ENCODE measurements at regions of chr1 and their contacts with region 1.

Region 1: DNA sequence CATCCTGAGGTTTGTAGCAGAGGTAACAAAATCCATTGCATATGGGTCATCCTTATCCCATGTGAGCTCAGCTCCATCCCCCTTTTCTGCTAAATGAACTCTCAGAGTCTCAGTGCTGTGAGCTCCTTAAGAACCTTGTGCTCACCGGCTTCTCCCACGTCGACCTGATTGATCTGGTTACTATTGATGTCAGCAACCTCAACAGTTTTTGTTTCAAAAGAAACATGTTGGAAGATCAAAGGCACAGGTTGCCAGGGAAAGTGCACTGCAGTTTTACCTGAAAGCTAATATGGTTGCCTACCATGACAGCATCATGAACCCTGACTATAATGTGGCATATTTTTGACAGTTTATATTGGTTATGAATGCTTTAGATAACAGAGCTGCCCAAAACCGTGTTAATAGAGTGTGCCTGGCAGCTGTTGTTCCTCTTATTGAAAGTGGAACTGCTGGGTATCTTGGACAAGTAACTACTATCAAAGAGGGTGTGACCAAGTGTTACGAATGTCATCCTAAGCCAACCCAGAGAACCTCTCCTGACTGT is 131.4 kb downstream of the HS2ST1 start:
- DNase-seq: peak; percentile 88
- H3K4me3 Mint-ChIP-seq: peak overlapping the region; percentile 71
- H3K27ac Mint-ChIP-seq: peak overlapping the region; percentile 86
- H3K4me1 Mint-ChIP-seq: peaks cover 25% of the 10 kb centered on the region
- H3K27me3 Mint-ChIP-seq: no peaks in the 10 kb centered on the region

Region 2: DNA sequence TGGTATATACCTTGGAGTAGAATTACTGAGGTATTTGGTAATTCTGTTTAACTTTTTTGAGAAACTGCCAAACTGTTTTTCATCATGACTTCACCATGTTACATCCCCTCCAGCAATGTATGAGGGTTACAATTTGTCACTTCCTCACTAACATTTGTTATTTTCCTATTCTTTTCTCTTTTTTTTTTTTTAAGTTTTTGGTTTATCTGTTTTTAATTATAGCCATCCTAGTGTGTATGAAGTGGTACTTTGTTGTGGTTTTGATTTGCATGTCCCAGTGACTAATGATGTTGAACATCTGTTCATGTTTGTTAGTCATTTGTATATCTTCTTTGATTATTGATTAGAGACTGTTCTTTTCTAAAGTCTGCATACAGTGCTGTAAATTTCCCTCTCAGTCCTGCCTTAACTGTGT is 15.9 kb after region 1 on chr1:
- intact Hi-C with region 1: loop called (anchors 2 kb)
- DNase-seq: no peak
- H3K4me3 Mint-ChIP-seq: no peak overlapping the region
- H3K27ac Mint-ChIP-seq: no peak overlapping the region
- H3K4me1 Mint-ChIP-seq: peaks cover 10% of the 10 kb centered on the region
- H3K27me3 Mint-ChIP-seq: no peaks in the 10 kb centered on the region

Region 3: DNA sequence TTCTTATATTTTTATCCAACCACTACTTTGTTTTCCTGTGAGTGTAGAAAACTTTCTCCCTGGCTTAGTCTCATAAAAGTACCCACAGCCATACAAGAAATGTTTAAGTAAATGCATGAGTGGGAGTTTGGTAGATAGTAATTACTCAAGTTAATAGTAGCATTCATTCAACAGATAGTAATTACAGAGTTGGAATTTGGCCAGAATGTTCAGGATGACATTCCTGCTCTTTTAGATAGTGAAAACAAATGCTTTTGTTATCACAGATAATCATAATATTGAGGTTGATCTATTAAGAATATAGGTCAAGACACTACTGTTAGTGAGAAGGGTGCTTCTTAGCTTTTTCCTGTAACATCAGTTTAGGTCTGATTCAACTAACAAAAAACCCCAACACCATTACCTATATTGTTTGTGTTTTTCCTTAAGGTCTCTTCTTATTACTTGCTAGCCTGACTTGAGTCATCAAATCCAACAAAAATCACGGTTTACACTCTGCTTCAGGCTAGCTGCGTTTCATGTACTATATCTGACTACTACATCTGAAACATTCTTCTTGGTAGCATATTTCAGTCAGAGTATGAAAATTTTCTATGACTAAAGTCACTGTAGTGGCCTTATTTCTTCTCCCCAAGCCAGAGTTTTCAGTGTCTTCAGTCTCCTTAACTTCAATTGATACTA is 32.3 kb after region 1 on chr1:
- intact Hi-C with region 1: loop called (anchors 2 kb)
- DNase-seq: no peak
- H3K4me3 Mint-ChIP-seq: no peak overlapping the region
- H3K27ac Mint-ChIP-seq: peak overlapping the region; percentile 73
- H3K4me1 Mint-ChIP-seq: peaks cover 9% of the 10 kb centered on the region
- H3K27me3 Mint-ChIP-seq: no peaks in the 10 kb centered on the region